ENCODE measurements at regions of chr12 and their contacts with region 1.

Region 1: GRCh38 chr12:100234598-100235304 is 32.1 kb downstream of the DEPDC4 start:
- DNase-seq: peak; percentile 81
- ATAC-seq: peak; percentile 65
- H3K4me3 ChIP-seq: peak overlapping the region; percentile 53
- H3K27ac ChIP-seq: peak overlapping the region; percentile 66
- H3K4me1 ChIP-seq: peaks cover 34% of the 10 kb centered on the region
- H3K27me3 ChIP-seq: no peaks in the 10 kb centered on the region
- CTCF ChIP-seq: peak; percentile 93

Region 2: GRCh38 chr12:100391856-100392255 is 157.1 kb after region 1 on chr12:
- CTCF ChIA-PET with region 1: no interaction called
- POLR2A ChIA-PET with region 1: no interaction called
- intact Hi-C with region 1: loop called (anchors 1 kb)
- DNase-seq: peak; percentile 54
- ATAC-seq: peak; percentile 74
- H3K4me3 ChIP-seq: no peak overlapping the region
- H3K27ac ChIP-seq: no peak overlapping the region
- H3K4me1 ChIP-seq: no peaks in the 10 kb centered on the region
- H3K27me3 ChIP-seq: peaks cover 17% of the 10 kb centered on the region
- CTCF ChIP-seq: peak; percentile 67